B cell (primary cell): ENCODE measurements at regions of chr19 and their contacts with region 1.

Region 1: GRCh38 chr19:41263850-41264580 is at the start of gene HNRNPUL1:
- DNase-seq: peak; percentile 100
- ATAC-seq: peak; percentile 72
- H3K4me3 ChIP-seq: peak within 1 kb of the TSS; percentile 85 to 95 (median 93)
- H3K4me3 Mint-ChIP-seq: peak within 1 kb of the TSS; percentile 98
- H3K27ac ChIP-seq: peak within 1 kb of the TSS; percentile 97 to 99
- H3K27ac Mint-ChIP-seq: peak within 1 kb of the TSS; percentile 100
- H3K4me1 ChIP-seq: peaks cover 24 to 38% of the 10 kb centered on the region in 2 donors
- H3K4me1 Mint-ChIP-seq: peaks cover 36% of the 10 kb centered on the region
- H3K27me3 ChIP-seq: no peaks in the 10 kb centered on the region
- H3K27me3 Mint-ChIP-seq: no peaks in the 10 kb centered on the region
- CTCF ChIP-seq: peak; percentile 29
- total RNA-seq, gene HNRNPUL1: 273 and 274 TPM in 2 replicates

Region 2: DNA sequence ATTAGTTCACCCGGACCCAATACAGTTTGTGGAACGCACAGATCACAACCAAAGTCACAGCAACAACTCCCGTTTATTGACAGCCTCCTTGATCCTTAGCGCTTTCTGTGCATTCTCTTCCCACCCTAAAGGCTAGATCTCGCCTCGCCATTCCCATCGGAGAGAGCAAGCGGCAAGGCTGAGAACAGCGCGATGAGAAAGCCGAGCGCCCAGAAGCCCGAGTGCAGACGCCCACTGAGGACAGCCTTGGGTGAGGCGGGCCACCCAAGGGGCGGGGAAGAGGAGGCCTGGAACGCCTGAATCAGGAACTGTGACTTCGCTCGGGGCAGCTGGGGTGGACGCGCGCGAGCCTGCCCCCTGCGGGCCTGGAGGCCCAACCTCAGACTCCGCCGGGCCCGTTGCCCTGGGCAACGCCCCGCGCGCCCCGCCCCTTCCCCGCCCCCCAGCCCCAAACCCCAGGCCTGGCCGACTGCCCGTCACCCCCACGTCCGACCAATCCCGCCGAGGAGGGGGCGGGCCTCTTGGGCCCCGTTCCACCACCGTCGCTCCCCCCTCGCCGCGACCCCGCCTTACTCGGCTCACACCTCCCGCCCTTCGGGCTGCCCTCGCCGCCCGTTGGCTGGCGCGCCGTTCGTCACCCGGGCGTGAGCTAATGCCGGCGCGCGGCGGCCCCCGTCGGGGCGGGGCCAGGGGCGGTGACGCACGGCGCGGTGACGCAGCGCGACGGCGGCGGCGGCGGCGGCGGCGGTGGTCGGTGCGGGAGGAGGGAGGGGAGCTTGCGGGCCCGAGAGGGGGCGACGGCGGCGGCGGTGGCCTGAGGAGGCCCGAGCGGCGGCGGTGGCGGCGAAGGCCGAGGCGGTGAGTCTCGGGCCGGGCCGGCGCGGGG is 1922.1 kb before region 1 on chr19 and contains the start of gene SAMD4B:
- CTCF ChIA-PET with region 1: no interaction called
- POLR2A ChIA-PET with region 1: no interaction called
- intact Hi-C with region 1: loop called (anchors 5 kb)
- DNase-seq: peak; percentile 99
- ATAC-seq: peak; percentile 92
- H3K4me3 ChIP-seq: peak within 1 kb of the TSS; percentile 88 to 98 (median 98)
- H3K4me3 Mint-ChIP-seq: peak within 1 kb of the TSS; percentile 97
- H3K27ac ChIP-seq: peak within 1 kb of the TSS; percentile 79 to 86
- H3K27ac Mint-ChIP-seq: peak within 1 kb of the TSS; percentile 95
- H3K4me1 ChIP-seq: peaks cover 32 to 46% of the 10 kb centered on the region in 2 donors
- H3K4me1 Mint-ChIP-seq: peaks cover 65% of the 10 kb centered on the region
- H3K27me3 ChIP-seq: no peaks in the 10 kb centered on the region
- H3K27me3 Mint-ChIP-seq: no peaks in the 10 kb centered on the region
- CTCF ChIP-seq: peak; percentile 81
- total RNA-seq, gene SAMD4B: 90.0 and 96.1 TPM in 2 replicates

Region 3: DNA sequence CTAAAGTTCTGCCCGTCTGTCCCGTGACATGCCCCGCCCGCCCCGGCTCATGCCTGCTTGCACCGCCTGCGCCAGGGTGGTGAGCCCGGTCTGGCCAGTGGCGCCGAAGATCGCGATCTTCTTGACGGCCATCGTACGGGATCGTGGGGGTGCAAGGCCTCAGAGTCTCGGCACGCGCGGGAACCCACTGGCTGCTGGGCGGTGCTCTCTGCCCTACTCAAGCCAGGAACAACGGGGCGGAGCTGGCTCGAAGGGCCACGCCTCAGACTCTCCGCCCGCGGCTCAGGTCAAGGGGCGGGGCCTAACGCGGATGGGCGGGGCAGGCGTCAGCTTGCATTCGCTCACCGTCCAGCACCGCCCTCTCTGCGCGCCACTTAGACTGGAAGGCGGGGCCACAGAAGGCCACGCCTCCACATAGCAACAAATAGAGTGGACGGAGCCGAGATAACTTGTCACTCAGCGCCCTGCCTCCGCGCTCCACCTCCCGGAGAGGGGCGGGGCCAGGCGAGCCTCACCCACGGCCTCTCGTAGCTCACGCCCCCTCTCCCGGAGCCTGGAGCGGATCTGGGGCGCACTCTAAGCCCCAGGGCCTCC is 798.4 kb before region 1 on chr19 and contains the start of gene BLVRB:
- CTCF ChIA-PET with region 1: no interaction called
- POLR2A ChIA-PET with region 1: no interaction called
- intact Hi-C with region 1: loop called (anchors 5 kb)
- DNase-seq: peak; percentile 100
- ATAC-seq: peak; percentile 89
- H3K4me3 ChIP-seq: peak within 1 kb of the TSS; percentile 1 to 70 (median 62)
- H3K4me3 Mint-ChIP-seq: peak within 1 kb of the TSS; percentile 87
- H3K27ac ChIP-seq: peak within 1 kb of the TSS; percentile 38 to 60
- H3K27ac Mint-ChIP-seq: peak within 1 kb of the TSS; percentile 66
- H3K4me1 ChIP-seq: peaks cover 30 to 44% of the 10 kb centered on the region in 2 donors
- H3K4me1 Mint-ChIP-seq: peaks cover 44% of the 10 kb centered on the region
- H3K27me3 ChIP-seq: peaks cover 0 to 23% (median 3%) of the 10 kb centered on the region in 4 experiments
- H3K27me3 Mint-ChIP-seq: peaks cover 12% of the 10 kb centered on the region
- CTCF ChIP-seq: no peak
- total RNA-seq, gene BLVRB: 11.8 and 14.2 TPM in 2 replicates

Region 4: DNA sequence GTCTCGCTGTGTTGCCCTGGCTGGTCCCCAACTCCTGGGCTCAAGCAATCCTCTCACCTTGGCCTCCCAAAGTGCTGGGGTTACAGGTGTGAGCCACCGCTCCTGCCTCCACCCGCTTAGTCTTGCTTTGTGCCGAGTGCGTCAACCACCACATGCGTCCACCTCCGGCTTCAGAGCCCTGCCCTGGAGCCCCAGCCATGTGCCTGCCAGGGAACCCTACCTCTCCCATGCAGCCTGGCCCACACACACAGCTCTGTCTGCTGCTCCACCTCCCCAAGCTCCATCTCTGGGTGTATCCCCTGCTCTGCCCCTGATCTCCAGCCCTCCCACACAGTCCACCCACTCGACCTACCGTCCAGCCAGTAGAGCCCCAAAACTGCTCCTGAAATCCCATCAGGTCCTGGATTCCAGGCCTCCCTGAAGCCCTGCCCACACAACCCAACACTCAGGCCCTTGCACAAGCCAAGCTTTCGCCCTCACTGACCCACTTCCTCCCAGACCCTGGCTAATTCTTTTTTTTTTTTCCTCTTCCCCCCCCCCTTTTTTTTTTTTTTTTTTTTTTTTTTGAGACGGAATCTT is 140.2 kb before region 1 on chr19:
- CTCF ChIA-PET with region 1: interaction called, 12 read pairs
- POLR2A ChIA-PET with region 1: no interaction called
- intact Hi-C with region 1: loop called (anchors 2 kb)
- DNase-seq: no peak
- ATAC-seq: no peak
- H3K4me3 ChIP-seq: no peak overlapping the region
- H3K4me3 Mint-ChIP-seq: no peak overlapping the region
- H3K27ac ChIP-seq: no peak overlapping the region
- H3K27ac Mint-ChIP-seq: no peak overlapping the region
- H3K4me1 ChIP-seq: peaks cover 6 to 16% of the 10 kb centered on the region in 2 donors
- H3K4me1 Mint-ChIP-seq: peaks cover 20% of the 10 kb centered on the region
- H3K27me3 ChIP-seq: peaks cover 0 to 3% (median 0%) of the 10 kb centered on the region in 4 experiments
- H3K27me3 Mint-ChIP-seq: peaks cover 13% of the 10 kb centered on the region
- CTCF ChIP-seq: no peak

Region 5: DNA sequence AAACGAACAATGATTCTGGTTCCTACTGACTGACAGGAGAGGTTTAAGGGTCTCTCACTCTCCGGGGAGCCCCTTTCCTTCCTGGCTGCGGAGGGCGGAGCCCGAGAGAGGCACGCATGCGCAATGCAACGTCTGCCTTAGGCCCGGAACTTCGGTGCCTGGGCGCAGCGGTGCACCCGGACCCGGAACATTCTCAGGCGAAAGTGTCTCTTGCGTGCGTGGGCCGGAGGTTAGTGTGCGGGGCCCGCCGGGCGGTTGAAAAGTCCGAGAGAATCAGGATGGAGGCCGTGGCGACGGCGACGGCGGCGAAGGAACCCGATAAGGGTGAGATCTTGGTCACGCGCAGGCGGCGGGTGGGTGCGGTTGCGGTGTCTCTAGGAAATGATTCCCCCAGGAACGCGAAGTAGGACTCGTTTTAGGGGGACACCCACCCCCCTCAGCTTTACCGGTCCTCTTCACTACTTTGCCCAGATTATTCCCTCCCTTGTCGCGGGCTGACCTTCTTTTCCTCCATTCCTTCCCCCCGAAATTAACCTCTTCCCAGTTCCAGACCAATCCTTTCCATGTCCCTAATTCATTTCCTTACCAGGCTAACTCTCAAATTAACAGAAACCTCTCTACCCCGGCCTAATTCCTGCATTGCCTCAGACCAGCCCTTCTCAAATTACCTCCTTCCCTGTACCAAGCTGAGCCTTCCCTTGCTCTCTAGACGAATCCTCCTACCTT is 46.2 kb after region 1 on chr19 and contains the start of gene CCDC97:
- CTCF ChIA-PET with region 1: interaction called, 67 read pairs
- POLR2A ChIA-PET with region 1: interaction called, 11 read pairs
- intact Hi-C with region 1: loop called (anchors 1 kb)
- DNase-seq: peak; percentile 97
- ATAC-seq: peak; percentile 77
- H3K4me3 ChIP-seq: peak within 1 kb of the TSS; percentile 59 to 100 (median 68)
- H3K4me3 Mint-ChIP-seq: peak within 1 kb of the TSS; percentile 98
- H3K27ac ChIP-seq: peak within 1 kb of the TSS; percentile 89 to 100
- H3K27ac Mint-ChIP-seq: peak within 1 kb of the TSS; percentile 100
- H3K4me1 ChIP-seq: peaks cover 49 to 62% of the 10 kb centered on the region in 2 donors
- H3K4me1 Mint-ChIP-seq: peaks cover 64% of the 10 kb centered on the region
- H3K27me3 ChIP-seq: no peaks in the 10 kb centered on the region
- H3K27me3 Mint-ChIP-seq: no peaks in the 10 kb centered on the region
- CTCF ChIP-seq: no peak
- total RNA-seq, gene CCDC97: 68.3 and 78.3 TPM in 2 replicates

Region 6: GRCh38 chr19:41363753-41364523 is 99.9 kb after region 1 on chr19 and contains the start of gene B9D2:
- CTCF ChIA-PET with region 1: interaction called, 16 read pairs
- POLR2A ChIA-PET with region 1: interaction called, 15 read pairs
- intact Hi-C with region 1: no loop called
- DNase-seq: peak; percentile 99
- ATAC-seq: peak; percentile 92
- H3K4me3 ChIP-seq: peak within 1 kb of the TSS; percentile 75 to 97 (median 86)
- H3K4me3 Mint-ChIP-seq: peak within 1 kb of the TSS; percentile 95
- H3K27ac ChIP-seq: peak within 1 kb of the TSS; percentile 99 to 100
- H3K27ac Mint-ChIP-seq: peak within 1 kb of the TSS; percentile 100
- H3K4me1 ChIP-seq: peaks cover 12 to 24% of the 10 kb centered on the region in 2 donors
- H3K4me1 Mint-ChIP-seq: peaks cover 27% of the 10 kb centered on the region
- H3K27me3 ChIP-seq: no peaks in the 10 kb centered on the region
- H3K27me3 Mint-ChIP-seq: no peaks in the 10 kb centered on the region
- CTCF ChIP-seq: no peak
- total RNA-seq, gene B9D2: 17.5 and 17.8 TPM in 2 replicates

Region 7: GRCh38 chr19:41548954-41549688 is 285.1 kb after region 1 on chr19:
- CTCF ChIA-PET with region 1: interaction called, 5 read pairs
- POLR2A ChIA-PET with region 1: no interaction called
- intact Hi-C with region 1: loop called (anchors 5 kb)
- DNase-seq: peak; percentile 81
- ATAC-seq: peak; percentile 59
- H3K4me3 ChIP-seq: peak overlapping the region; percentile 63 to 98 (median 77)
- H3K4me3 Mint-ChIP-seq: peak overlapping the region; percentile 96
- H3K27ac ChIP-seq: peak overlapping the region; percentile 57 to 92
- H3K27ac Mint-ChIP-seq: peak overlapping the region; percentile 98
- H3K4me1 ChIP-seq: peaks cover 66 to 73% of the 10 kb centered on the region in 2 donors
- H3K4me1 Mint-ChIP-seq: peaks cover 71% of the 10 kb centered on the region
- H3K27me3 ChIP-seq: no peaks in the 10 kb centered on the region
- H3K27me3 Mint-ChIP-seq: no peaks in the 10 kb centered on the region
- CTCF ChIP-seq: no peak